Activated naive CD4-positive, alpha-beta T cell treated with anti-CD3 and anti-CD28 coated beads for 36 hours (primary cell): ENCODE measurements at regions of chr22 and their contacts with region 1.

Region 1: GRCh38 chr22:33083212-33083611 is 25.0 kb upstream of the SYN3 start:
- DNase-seq: no peak
- H3K4me3 Mint-ChIP-seq: no peak overlapping the region
- H3K27ac Mint-ChIP-seq: no peak overlapping the region
- H3K4me1 Mint-ChIP-seq: no peaks in the 10 kb centered on the region
- H3K27me3 Mint-ChIP-seq: peaks cover 19% of the 10 kb centered on the region

Region 2: GRCh38 chr22:33209930-33210784 is 126.9 kb after region 1 on chr22:
- CTCF ChIA-PET with region 1: interaction called, 4 read pairs
- intact Hi-C with region 1: loop called (anchors 10 kb)
- DNase-seq: peak; percentile 27
- H3K4me3 Mint-ChIP-seq: no peak overlapping the region
- H3K27ac Mint-ChIP-seq: no peak overlapping the region
- H3K4me1 Mint-ChIP-seq: no peaks in the 10 kb centered on the region
- H3K27me3 Mint-ChIP-seq: peaks cover 11% of the 10 kb centered on the region